Activated B cell treated with CpG ODN at 0.5 μM for 24 hours (primary cell): ENCODE measurements at regions of chr2 and their contacts with region 1.

Region 1: DNA sequence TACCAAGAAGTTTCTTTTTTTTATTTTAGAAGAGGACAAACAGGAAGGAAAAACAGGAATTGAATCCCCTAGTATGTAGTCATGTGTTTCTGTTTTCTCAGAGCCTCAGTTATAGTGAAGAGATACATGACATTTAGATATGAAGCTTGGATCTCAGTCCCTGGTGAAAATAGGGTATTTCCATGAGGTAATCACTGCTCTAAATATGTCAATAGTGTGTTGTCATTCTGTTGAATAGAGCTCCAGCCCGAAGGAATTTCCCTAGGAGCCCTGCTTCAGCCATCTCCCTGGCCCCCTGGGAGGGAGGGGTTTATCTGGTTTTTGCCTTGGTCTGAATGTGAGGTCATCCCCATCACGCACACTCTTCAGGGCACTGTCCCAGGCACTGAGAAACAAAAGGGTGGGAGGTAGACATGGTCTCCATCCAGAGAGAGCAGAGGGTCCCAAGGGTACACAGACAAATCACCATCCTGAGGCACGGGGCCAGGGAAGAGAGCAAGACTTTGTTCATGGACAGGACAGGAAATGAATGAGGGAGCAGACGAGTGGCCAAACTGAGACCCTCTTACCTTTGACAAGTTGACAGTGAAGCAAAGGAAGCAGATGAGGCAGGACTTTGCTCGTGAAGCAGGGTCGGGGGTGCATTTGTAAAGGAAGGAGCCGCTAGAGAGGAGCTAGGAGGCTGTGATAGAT is 47.0 kb upstream of the REL start:
- DNase-seq: no peak
- ATAC-seq: peak; percentile 71
- H3K4me3 Mint-ChIP-seq: peak overlapping the region; percentile 44
- H3K27ac Mint-ChIP-seq: peak overlapping the region; percentile 92
- H3K4me1 Mint-ChIP-seq: peaks cover 75% of the 10 kb centered on the region
- H3K27me3 Mint-ChIP-seq: no peaks in the 10 kb centered on the region
- CTCF ChIP-seq: no peak

Region 2: GRCh38 chr2:60948926-60949579 is 114.6 kb after region 1 on chr2:
- CTCF ChIA-PET with region 1: no interaction called
- POLR2A ChIA-PET with region 1: interaction called, 10 read pairs
- intact Hi-C with region 1: no loop called
- DNase-seq: no peak
- ATAC-seq: no peak
- H3K4me3 Mint-ChIP-seq: no peak overlapping the region
- H3K27ac Mint-ChIP-seq: no peak overlapping the region
- H3K4me1 Mint-ChIP-seq: peaks cover 7% of the 10 kb centered on the region
- H3K27me3 Mint-ChIP-seq: no peaks in the 10 kb centered on the region
- CTCF ChIP-seq: no peak

Region 3: DNA sequence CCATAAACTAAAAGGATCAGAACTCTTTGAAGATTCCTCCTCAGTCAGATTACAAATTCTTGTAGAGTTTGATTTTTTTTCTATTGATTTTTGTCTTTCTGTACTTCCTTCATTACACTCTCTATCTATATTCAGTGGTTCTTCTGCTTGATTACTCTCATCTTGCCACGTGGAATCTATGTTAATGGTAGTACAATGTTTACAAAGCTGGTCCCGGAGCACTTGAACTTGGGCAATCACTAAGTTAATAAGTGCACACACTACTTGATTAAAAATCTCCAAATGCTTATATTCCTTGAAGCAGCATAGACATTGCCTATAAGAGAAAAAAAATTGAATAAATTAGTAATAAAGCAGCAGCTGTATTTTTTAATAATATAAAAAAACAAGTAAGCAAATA is 571.4 kb after region 1 on chr2:
- CTCF ChIA-PET with region 1: no interaction called
- POLR2A ChIA-PET with region 1: no interaction called
- intact Hi-C with region 1: no loop called
- DNase-seq: no peak
- ATAC-seq: no peak
- H3K4me3 Mint-ChIP-seq: no peak overlapping the region
- H3K27ac Mint-ChIP-seq: no peak overlapping the region
- H3K4me1 Mint-ChIP-seq: peaks cover 8% of the 10 kb centered on the region
- H3K27me3 Mint-ChIP-seq: no peaks in the 10 kb centered on the region
- CTCF ChIP-seq: no peak